GM10248 (cell line): ENCODE measurements at regions of chr3 and their contacts with region 1.

Region 1: DNA sequence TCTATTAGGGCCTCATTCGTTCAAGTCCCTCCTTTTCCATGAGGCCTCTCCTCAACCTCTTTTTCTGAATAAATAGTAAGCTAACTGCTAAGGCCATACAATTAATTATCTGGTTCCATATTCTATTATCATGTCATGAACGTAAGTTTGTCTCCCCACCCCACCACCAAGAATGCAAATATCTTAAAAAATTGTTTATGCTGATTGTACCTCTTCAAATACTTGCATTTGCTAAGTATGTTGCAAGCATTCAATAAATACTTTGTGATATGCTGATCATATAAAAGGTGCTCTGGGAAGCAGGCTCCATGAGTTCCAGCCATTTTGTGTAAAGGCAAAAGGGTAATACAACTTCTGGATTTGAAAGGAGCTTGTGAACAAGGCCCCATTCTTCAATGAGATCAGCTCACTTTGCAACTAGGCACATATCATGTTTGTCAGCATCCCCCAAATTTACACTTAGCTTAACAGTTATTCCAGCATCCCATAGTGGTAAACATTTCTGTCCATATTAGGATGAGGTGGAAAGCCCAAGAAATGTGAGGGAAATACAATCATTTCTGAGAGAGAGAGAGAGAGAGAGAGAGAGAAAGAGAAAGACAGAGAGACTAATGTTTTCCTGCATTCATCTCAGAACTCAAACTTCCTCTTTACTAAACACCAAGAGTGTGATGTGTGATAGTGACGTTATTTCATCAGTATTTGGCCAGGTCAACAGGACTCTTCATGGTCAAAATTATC is 33.2 kb downstream of the SLC12A8 start:
- DNase-seq: peak; percentile 65
- CTCF ChIP-seq: no peak

Region 2: GRCh38 chr3:125192190-125193035 is 13.1 kb after region 1 on chr3:
- CTCF ChIA-PET with region 1: interaction called, 16 read pairs
- POLR2A ChIA-PET with region 1: no interaction called
- DNase-seq: peak; percentile 80
- CTCF ChIP-seq: peak; percentile 56